ENCODE measurements at regions of chr15 and their contacts with region 1.

Region 1: DNA sequence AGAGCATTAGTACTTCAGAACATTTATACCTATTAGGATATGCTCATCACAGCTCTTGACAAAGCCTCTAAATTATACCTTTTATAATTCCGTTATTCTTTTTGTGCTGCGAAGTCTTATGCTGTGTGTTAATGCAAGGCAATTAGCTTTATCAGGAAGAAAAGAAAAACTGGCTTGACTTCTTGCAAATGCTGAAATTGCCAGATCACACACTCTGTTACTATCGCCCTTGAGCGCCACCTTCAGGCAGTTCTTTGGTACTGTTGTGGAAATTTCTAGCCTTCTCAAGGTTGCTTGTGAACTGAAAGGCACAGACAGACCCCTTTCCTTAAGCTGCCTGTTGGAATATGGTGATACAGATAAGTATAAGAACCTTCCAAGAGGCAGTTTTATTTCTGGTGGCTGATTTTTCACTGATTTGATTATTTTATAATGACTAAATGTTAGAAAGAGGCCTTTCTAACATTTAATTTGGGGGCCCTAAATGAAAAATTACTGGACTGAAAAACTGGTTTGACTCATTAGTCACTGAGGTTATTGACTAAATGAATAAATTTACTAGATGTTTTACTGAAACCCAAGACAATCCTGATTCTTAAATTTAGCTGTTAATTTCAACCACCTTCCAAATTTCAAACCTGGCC is 126.2 kb upstream of the RASGRP1 start:
- DNase-seq: peak; percentile 79 to 83 (median 81)
- H3K4me3 ChIP-seq: no peak overlapping the region
- H3K4me3 Mint-ChIP-seq: peak overlapping the region in 3 of 8 donors; percentile 46 to 83 (median 54)
- H3K27ac ChIP-seq: no peak overlapping the region
- H3K27ac Mint-ChIP-seq: peak overlapping the region in 6 of 7 donors; percentile 64 to 93 (median 90)
- H3K4me1 ChIP-seq: peaks cover 77% of the 10 kb centered on the region
- H3K4me1 Mint-ChIP-seq: peaks cover 64 to 83% (median 70%) of the 10 kb centered on the region in 4 donors
- H3K27me3 ChIP-seq: no peaks in the 10 kb centered on the region
- H3K27me3 Mint-ChIP-seq: no peaks in the 10 kb centered on the region

Region 2: GRCh38 chr15:38453971-38454695 is 236.7 kb before region 1 on chr15 and contains the start of gene FAM98B:
- CTCF ChIA-PET with region 1: interaction called, 22 read pairs
- POLR2A ChIA-PET with region 1: interaction called, 31 read pairs
- intact Hi-C with region 1: no loop called
- DNase-seq: peak; percentile 80 to 88 (median 84)
- H3K4me3 ChIP-seq: peak within 1 kb of the TSS; percentile 88 to 95
- H3K4me3 Mint-ChIP-seq: peak within 1 kb of the TSS; percentile 95 to 99 (median 97)
- H3K27ac ChIP-seq: peak within 1 kb of the TSS; percentile 74
- H3K27ac Mint-ChIP-seq: peak within 1 kb of the TSS; percentile 94 to 98 (median 96)
- H3K4me1 ChIP-seq: peaks cover 23% of the 10 kb centered on the region
- H3K4me1 Mint-ChIP-seq: peaks cover 26 to 39% (median 32%) of the 10 kb centered on the region in 4 donors
- H3K27me3 ChIP-seq: no peaks in the 10 kb centered on the region
- H3K27me3 Mint-ChIP-seq: no peaks in the 10 kb centered on the region
- total RNA-seq, gene FAM98B: 22.0 to 26.3 TPM

Region 3: GRCh38 chr15:38479266-38479665 is 211.5 kb before region 1 on chr15:
- CTCF ChIA-PET with region 1: interaction called, 196 read pairs
- POLR2A ChIA-PET with region 1: interaction called, 15 read pairs
- intact Hi-C with region 1: loop called (anchors 1 kb)
- DNase-seq: no peak
- H3K4me3 ChIP-seq: no peak overlapping the region
- H3K4me3 Mint-ChIP-seq: no peak overlapping the region
- H3K27ac ChIP-seq: no peak overlapping the region
- H3K27ac Mint-ChIP-seq: peak overlapping the region in 3 of 7 donors; percentile 37 to 70 (median 48)
- H3K4me1 ChIP-seq: peaks cover 22% of the 10 kb centered on the region
- H3K4me1 Mint-ChIP-seq: peaks cover 21 to 32% (median 29%) of the 10 kb centered on the region in 4 donors
- H3K27me3 ChIP-seq: no peaks in the 10 kb centered on the region
- H3K27me3 Mint-ChIP-seq: no peaks in the 10 kb centered on the region

Region 4: GRCh38 chr15:38499651-38500050 is 191.2 kb before region 1 on chr15:
- CTCF ChIA-PET with region 1: interaction called, 31 read pairs
- POLR2A ChIA-PET with region 1: interaction called, 9 read pairs
- intact Hi-C with region 1: no loop called
- DNase-seq: no peak
- H3K4me3 ChIP-seq: no peak overlapping the region
- H3K4me3 Mint-ChIP-seq: peak overlapping the region in 1 of 8 donors; percentile 27
- H3K27ac ChIP-seq: no peak overlapping the region
- H3K27ac Mint-ChIP-seq: peak overlapping the region; percentile 73 to 92 (median 86)
- H3K4me1 ChIP-seq: peaks cover 5% of the 10 kb centered on the region
- H3K4me1 Mint-ChIP-seq: peaks cover 6 to 23% (median 14%) of the 10 kb centered on the region in 4 donors
- H3K27me3 ChIP-seq: no peaks in the 10 kb centered on the region
- H3K27me3 Mint-ChIP-seq: no peaks in the 10 kb centered on the region

Region 5: DNA sequence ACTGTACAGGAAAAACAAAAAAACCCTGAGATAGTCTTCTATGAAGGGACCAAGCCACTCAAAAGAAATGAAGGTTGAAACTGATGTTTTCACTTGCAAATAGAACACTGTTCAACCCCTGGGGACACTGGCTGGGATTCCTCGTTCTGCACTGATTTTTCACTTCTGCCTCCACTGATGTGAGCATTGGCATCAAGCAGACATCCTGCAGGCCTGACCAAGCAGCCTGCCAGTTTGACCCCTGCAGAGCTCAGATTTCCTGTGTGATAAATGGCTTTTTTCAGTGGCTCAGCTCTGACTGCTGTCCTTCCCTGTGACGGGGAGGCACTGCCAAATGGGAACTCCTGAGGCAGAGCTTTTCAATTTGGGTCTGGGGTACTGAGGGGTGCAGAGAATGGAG is 176.2 kb before region 1 on chr15:
- CTCF ChIA-PET with region 1: interaction called, 55 read pairs
- POLR2A ChIA-PET with region 1: interaction called, 5 read pairs
- intact Hi-C with region 1: no loop called
- DNase-seq: no peak
- H3K4me3 ChIP-seq: no peak overlapping the region
- H3K4me3 Mint-ChIP-seq: no peak overlapping the region
- H3K27ac ChIP-seq: no peak overlapping the region
- H3K27ac Mint-ChIP-seq: peak overlapping the region; percentile 15 to 90 (median 72)
- H3K4me1 ChIP-seq: peaks cover 7% of the 10 kb centered on the region
- H3K4me1 Mint-ChIP-seq: peaks cover 12 to 24% (median 19%) of the 10 kb centered on the region in 4 donors
- H3K27me3 ChIP-seq: no peaks in the 10 kb centered on the region
- H3K27me3 Mint-ChIP-seq: no peaks in the 10 kb centered on the region

Region 6: DNA sequence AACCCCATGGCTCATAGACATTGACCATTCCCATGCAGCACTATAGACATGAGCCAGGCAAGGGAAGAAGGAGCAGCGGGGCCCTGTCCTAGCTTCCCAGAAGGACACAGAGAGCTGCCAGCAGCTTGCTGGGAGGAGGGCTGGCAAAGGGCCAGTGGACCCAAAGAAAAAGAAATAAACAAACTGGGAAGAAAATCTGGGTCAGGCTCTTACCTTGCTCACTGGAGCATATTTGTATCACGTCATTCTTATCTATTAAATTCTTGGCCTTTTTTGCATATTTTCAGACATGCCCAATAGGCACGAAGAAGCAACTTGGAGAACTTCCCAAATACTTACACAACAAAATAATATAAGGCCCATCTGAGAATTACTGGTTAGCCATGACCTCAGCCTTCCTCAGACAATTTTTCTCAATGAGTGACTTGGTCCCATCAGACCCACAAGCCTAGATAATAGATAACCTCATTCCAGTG is 154.6 kb before region 1 on chr15:
- CTCF ChIA-PET with region 1: interaction called, 59 read pairs
- POLR2A ChIA-PET with region 1: interaction called, 7 read pairs
- intact Hi-C with region 1: no loop called
- DNase-seq: no peak
- H3K4me3 ChIP-seq: no peak overlapping the region
- H3K4me3 Mint-ChIP-seq: peak overlapping the region in 4 of 8 donors; percentile 14 to 73 (median 34)
- H3K27ac ChIP-seq: no peak overlapping the region
- H3K27ac Mint-ChIP-seq: peak overlapping the region in 6 of 7 donors; percentile 36 to 84 (median 59)
- H3K4me1 ChIP-seq: peaks cover 97% of the 10 kb centered on the region
- H3K4me1 Mint-ChIP-seq: peaks cover 83 to 100% (median 92%) of the 10 kb centered on the region in 4 donors
- H3K27me3 ChIP-seq: no peaks in the 10 kb centered on the region
- H3K27me3 Mint-ChIP-seq: no peaks in the 10 kb centered on the region

Region 7: GRCh38 chr15:38647683-38648082 is 43.1 kb before region 1 on chr15:
- CTCF ChIA-PET with region 1: interaction called, 451 read pairs
- POLR2A ChIA-PET with region 1: interaction called, 173 read pairs
- intact Hi-C with region 1: no loop called
- DNase-seq: no peak
- H3K4me3 ChIP-seq: no peak overlapping the region
- H3K4me3 Mint-ChIP-seq: peak overlapping the region in 2 of 8 donors; percentile 6 to 52
- H3K27ac ChIP-seq: peak overlapping the region; percentile 4
- H3K27ac Mint-ChIP-seq: peak overlapping the region; percentile 70 to 96 (median 91)
- H3K4me1 ChIP-seq: peaks cover 81% of the 10 kb centered on the region
- H3K4me1 Mint-ChIP-seq: peaks cover 55 to 78% (median 68%) of the 10 kb centered on the region in 4 donors
- H3K27me3 ChIP-seq: no peaks in the 10 kb centered on the region
- H3K27me3 Mint-ChIP-seq: no peaks in the 10 kb centered on the region

Measured in CD4-positive, alpha-beta memory T cell (primary cell).